CD4-positive, alpha-beta memory T cell (primary cell): ENCODE measurements at regions of chr7 and their contacts with region 1.

Region 1: GRCh38 chr7:104848138-104848990 is 165.6 kb upstream of the KMT2E start:
- DNase-seq: peak; percentile 26 to 46 (median 36)
- H3K4me3 ChIP-seq: no peak overlapping the region
- H3K4me3 Mint-ChIP-seq: no peak overlapping the region
- H3K27ac ChIP-seq: no peak overlapping the region
- H3K27ac Mint-ChIP-seq: no peak overlapping the region
- H3K4me1 ChIP-seq: no peaks in the 10 kb centered on the region
- H3K4me1 Mint-ChIP-seq: no peaks in the 10 kb centered on the region
- H3K27me3 ChIP-seq: no peaks in the 10 kb centered on the region
- H3K27me3 Mint-ChIP-seq: peaks cover 19 to 20% of the 10 kb centered on the region in 2 donors

Region 2: GRCh38 chr7:104862719-104863118 is 14.4 kb after region 1 on chr7:
- CTCF ChIA-PET with region 1: interaction called, 35 read pairs
- POLR2A ChIA-PET with region 1: no interaction called
- intact Hi-C with region 1: no loop called
- DNase-seq: no peak
- H3K4me3 ChIP-seq: no peak overlapping the region
- H3K4me3 Mint-ChIP-seq: no peak overlapping the region
- H3K27ac ChIP-seq: no peak overlapping the region
- H3K27ac Mint-ChIP-seq: no peak overlapping the region
- H3K4me1 ChIP-seq: peaks cover 9% of the 10 kb centered on the region
- H3K4me1 Mint-ChIP-seq: peaks cover 9 to 11% (median 10%) of the 10 kb centered on the region in 4 donors
- H3K27me3 ChIP-seq: no peaks in the 10 kb centered on the region
- H3K27me3 Mint-ChIP-seq: peaks cover 9 to 10% of the 10 kb centered on the region in 2 donors

Region 3: DNA sequence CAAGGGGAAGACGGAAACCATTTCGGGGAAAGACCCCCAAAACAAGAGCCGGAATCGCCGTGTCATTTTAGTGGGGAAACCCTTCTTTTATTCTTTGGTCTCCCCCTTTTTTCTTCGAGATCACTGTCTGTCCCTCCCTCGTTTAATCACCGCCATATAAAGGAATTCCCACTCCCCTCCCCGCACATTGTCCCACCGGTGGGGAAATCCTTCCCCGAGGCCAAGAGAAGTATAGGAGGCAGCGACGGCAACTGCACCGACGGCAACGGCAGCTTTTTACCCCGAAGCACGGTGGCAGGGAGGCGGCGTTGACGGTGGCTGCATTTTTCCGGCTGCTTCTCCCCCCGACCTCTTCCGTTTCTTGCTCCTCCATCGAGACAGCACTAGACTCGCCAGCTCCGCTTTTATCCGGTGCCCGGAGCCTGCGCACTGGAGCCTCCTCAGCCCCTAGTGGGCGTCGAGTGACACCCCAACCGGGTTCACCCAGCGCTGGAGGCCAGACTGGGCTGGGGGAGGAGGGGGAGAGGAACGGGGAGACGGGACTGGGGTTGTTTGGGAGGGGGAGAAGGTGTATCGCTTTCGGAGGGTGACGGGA is 165.0 kb after region 1 on chr7:
- CTCF ChIA-PET with region 1: no interaction called
- POLR2A ChIA-PET with region 1: no interaction called
- intact Hi-C with region 1: no loop called
- DNase-seq: peak; percentile 95 to 97 (median 97)
- H3K4me3 ChIP-seq: peak overlapping the region; percentile 87 to 99
- H3K4me3 Mint-ChIP-seq: peak overlapping the region; percentile 94 to 100 (median 98)
- H3K27ac ChIP-seq: peak overlapping the region; percentile 100
- H3K27ac Mint-ChIP-seq: peak overlapping the region; percentile 99 to 100 (median 100)
- H3K4me1 ChIP-seq: peaks cover 56% of the 10 kb centered on the region
- H3K4me1 Mint-ChIP-seq: peaks cover 22 to 90% (median 38%) of the 10 kb centered on the region in 4 donors
- H3K27me3 ChIP-seq: no peaks in the 10 kb centered on the region
- H3K27me3 Mint-ChIP-seq: peaks cover 0 to 9% of the 10 kb centered on the region in 2 donors